ENCODE measurements at regions of chr3 and their contacts with region 1.

Region 1: GRCh38 chr3:196073188-196073838 is 8.6 kb downstream of the TFRC start:
- DNase-seq: peak; percentile 60 to 76 (median 71)
- ATAC-seq: peak; percentile 87
- H3K4me3 ChIP-seq: no peak overlapping the region
- H3K27ac ChIP-seq: no peak overlapping the region
- H3K4me1 ChIP-seq: no peaks in the 10 kb centered on the region
- H3K27me3 ChIP-seq: no peaks in the 10 kb centered on the region
- CTCF ChIP-seq: peak; percentile 50 to 93 (median 78)
- POLR2A ChIP-seq: no peak

Region 2: DNA sequence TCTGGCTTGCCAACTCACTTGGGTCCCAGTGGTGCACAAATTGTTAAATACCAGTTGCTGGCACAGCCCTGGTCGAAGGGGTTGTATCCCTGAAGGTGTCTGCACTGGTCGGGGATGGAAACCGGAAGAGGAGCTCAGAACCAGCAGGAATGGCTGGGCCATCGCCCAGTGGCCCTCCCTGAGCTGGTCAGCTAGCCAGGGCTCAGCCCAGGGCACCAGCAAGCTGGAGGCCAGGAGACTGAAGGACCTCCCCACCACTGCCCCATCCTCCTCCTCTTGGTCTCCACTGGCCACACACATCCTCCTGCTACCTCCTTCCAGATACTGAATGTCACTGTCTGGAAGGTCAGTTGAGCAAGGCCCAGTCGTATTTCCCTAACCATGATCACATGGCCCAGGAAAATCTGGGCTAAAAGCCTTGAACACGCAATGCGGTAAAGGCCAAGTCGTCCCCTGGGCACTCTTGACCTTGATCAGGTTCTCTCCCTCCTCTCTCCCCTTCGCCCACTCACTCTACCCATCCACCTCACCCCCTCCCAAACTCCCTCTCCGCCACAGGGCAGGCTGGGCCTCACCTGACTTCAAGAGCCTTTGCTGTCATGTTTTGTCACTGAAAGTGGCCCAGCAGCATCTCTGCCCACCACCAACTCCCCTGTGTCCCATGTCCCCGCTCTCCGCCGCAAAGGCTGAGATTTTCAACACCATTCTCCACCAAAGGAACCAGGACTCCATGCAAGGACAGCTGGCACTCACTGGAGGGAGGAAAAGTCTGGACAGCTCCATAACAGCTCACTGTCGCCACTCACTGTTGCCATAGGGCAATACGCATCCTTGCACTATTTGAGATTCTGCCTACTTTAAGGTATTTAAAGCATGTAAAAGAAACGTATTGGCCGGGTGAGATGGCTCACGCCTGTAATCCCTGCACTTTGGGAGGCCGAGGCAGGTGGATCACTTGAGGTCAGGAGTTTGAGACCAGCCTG is 125.7 kb after region 1 on chr3:
- intact Hi-C with region 1: loop called (anchors 5 kb)
- DNase-seq: no peak
- ATAC-seq: no peak
- H3K4me3 ChIP-seq: no peak overlapping the region
- H3K27ac ChIP-seq: no peak overlapping the region
- H3K4me1 ChIP-seq: peaks cover 6% of the 10 kb centered on the region
- H3K27me3 ChIP-seq: no peaks in the 10 kb centered on the region
- CTCF ChIP-seq: no peak
- POLR2A ChIP-seq: no peak

Region 3: GRCh38 chr3:196219194-196219978 is 146.1 kb after region 1 on chr3:
- intact Hi-C with region 1: no loop called
- DNase-seq: peak in 2 of 4 donors; percentile 36 to 66
- ATAC-seq: peak; percentile 27
- H3K4me3 ChIP-seq: no peak overlapping the region
- H3K27ac ChIP-seq: no peak overlapping the region
- H3K4me1 ChIP-seq: peaks cover 15% of the 10 kb centered on the region
- H3K27me3 ChIP-seq: no peaks in the 10 kb centered on the region
- CTCF ChIP-seq: no peak
- POLR2A ChIP-seq: no peak

Region 4: GRCh38 chr3:196327405-196327804 is 254.1 kb after region 1 on chr3:
- intact Hi-C with region 1: no loop called
- DNase-seq: no peak
- ATAC-seq: no peak
- H3K4me3 ChIP-seq: no peak overlapping the region
- H3K27ac ChIP-seq: no peak overlapping the region
- H3K4me1 ChIP-seq: no peaks in the 10 kb centered on the region
- H3K27me3 ChIP-seq: no peaks in the 10 kb centered on the region
- CTCF ChIP-seq: no peak
- POLR2A ChIP-seq: no peak

Region 5: DNA sequence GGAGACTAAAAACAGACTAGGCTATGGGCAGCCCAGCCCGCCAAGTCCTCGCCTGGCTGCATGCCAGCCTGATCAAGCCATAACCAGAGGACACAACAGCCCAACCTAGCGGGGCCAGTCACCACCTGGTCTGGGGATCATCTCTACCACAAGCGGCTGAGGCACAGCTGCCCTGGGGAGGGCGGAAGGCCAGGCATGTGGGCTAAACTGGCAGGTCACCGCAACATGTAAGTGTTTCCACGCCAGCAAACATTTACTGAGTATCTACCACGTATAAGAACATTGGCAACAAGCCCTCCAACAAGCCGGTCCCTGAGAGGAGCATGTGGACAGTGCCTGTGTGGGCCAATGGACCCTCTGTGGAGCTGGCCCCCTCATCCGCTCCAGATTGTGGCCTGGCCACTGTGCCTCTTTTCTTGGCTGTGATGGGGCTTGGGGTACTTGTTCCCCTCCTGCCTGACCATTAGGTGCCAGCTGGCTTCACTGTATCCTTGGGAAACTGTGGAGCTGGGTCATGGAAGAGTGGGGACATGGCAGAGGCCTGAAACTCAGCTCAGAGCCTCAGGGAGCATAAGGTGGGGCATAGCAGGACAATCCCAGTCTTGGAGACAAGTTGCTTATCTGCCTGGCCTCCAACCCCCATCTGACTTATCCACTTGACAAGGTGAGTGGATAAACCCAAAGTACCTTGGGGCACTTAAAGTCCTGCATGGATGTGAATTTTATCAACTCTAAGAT is 349.9 kb after region 1 on chr3:
- intact Hi-C with region 1: no loop called
- DNase-seq: peak; percentile 70 to 82 (median 78)
- ATAC-seq: peak; percentile 80
- H3K4me3 ChIP-seq: no peak overlapping the region
- H3K27ac ChIP-seq: peak overlapping the region; percentile 24 to 64 (median 34)
- H3K4me1 ChIP-seq: peaks cover 25% of the 10 kb centered on the region
- H3K27me3 ChIP-seq: no peaks in the 10 kb centered on the region
- CTCF ChIP-seq: no peak
- POLR2A ChIP-seq: no peak